ENCODE measurements at regions of chr5 and their contacts with region 1.

Region 1: GRCh38 chr5:16616536-16617273 is at the start of gene RETREG1:
- DNase-seq: peak; percentile 84 to 92 (median 91)
- ATAC-seq: peak; percentile 93
- H3K4me3 ChIP-seq: peak within 1 kb of the TSS; percentile 79
- H3K4me3 Mint-ChIP-seq: peak within 1 kb of the TSS in 6 of 10 donors; percentile 96 to 99 (median 98)
- H3K27ac ChIP-seq: peak within 1 kb of the TSS; percentile 98
- H3K27ac Mint-ChIP-seq: peak within 1 kb of the TSS in 7 of 9 donors; percentile 92 to 99 (median 99)
- H3K4me1 ChIP-seq: peaks cover 10 to 32% of the 10 kb centered on the region in 2 donors
- H3K4me1 Mint-ChIP-seq: peaks cover 32 to 52% (median 44%) of the 10 kb centered on the region in 7 donors
- H3K27me3 ChIP-seq: no peaks in the 10 kb centered on the region
- H3K27me3 Mint-ChIP-seq: no peaks in the 10 kb centered on the region
- total RNA-seq, gene RETREG1: 37.4 to 78.3 (median 47.4) TPM

Region 2: DNA sequence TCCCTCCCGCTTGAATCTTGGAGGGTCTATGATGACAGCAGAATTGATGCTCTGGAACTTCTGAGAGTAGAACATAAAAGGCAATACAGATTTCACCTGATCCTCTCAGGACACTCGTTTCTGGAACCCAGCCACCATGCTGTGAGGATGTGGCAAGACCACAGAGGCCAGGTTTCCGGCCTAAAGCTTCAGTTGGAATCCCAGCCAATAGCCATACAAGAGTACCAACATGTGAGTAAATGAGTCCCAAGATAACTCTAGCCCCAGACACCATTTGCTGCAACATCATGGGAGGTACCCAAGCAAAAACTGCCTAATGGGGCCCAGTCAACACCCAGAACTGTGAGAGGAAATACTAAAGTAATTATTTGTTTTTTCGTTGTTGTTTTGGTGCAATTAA is 371.5 kb before region 1 on chr5:
- CTCF ChIA-PET with region 1: no interaction called
- POLR2A ChIA-PET with region 1: no interaction called
- intact Hi-C with region 1: no loop called
- DNase-seq: no peak
- ATAC-seq: no peak
- H3K4me3 ChIP-seq: no peak overlapping the region
- H3K4me3 Mint-ChIP-seq: no peak overlapping the region
- H3K27ac ChIP-seq: no peak overlapping the region
- H3K27ac Mint-ChIP-seq: no peak overlapping the region
- H3K4me1 ChIP-seq: no peaks in the 10 kb centered on the region
- H3K4me1 Mint-ChIP-seq: peaks cover 0 to 2% (median 0%) of the 10 kb centered on the region in 7 donors
- H3K27me3 ChIP-seq: no peaks in the 10 kb centered on the region
- H3K27me3 Mint-ChIP-seq: peaks cover 0 to 11% (median 5%) of the 10 kb centered on the region in 5 donors

Region 3: GRCh38 chr5:16489322-16489791 is 127.3 kb before region 1 on chr5:
- CTCF ChIA-PET with region 1: no interaction called
- POLR2A ChIA-PET with region 1: no interaction called
- intact Hi-C with region 1: loop called in 1 of 2 experiments (anchors 5 kb)
- DNase-seq: peak in 5 of 9 donors; percentile 18 to 53 (median 46)
- ATAC-seq: peak; percentile 86
- H3K4me3 ChIP-seq: no peak overlapping the region
- H3K4me3 Mint-ChIP-seq: no peak overlapping the region
- H3K27ac ChIP-seq: no peak overlapping the region
- H3K27ac Mint-ChIP-seq: peak overlapping the region in 4 of 9 donors; percentile 1 to 60 (median 41)
- H3K4me1 ChIP-seq: no peaks in the 10 kb centered on the region
- H3K4me1 Mint-ChIP-seq: peaks cover 9 to 86% (median 71%) of the 10 kb centered on the region in 7 donors
- H3K27me3 ChIP-seq: no peaks in the 10 kb centered on the region
- H3K27me3 Mint-ChIP-seq: no peaks in the 10 kb centered on the region

Region 4: DNA sequence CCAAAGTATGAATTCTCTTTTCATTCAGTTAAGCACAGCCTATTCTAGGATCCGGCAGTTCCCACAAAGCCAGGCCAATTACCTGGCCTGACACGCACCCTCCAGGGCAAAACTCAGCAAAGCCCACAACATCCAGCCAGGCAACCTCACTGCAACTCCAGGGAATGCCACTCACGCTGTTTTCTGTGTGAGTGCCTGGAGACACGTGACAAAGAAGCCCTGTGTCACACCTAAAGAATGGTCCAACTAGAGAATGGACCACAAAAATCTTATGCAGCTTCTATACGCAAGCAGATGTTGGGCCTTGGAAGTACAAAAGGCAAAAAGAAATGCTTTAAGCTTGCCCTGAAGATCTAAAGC is 20.1 kb before region 1 on chr5:
- CTCF ChIA-PET with region 1: no interaction called
- POLR2A ChIA-PET with region 1: no interaction called
- intact Hi-C with region 1: loop called in 1 of 2 experiments (anchors 2 kb)
- DNase-seq: no peak
- ATAC-seq: no peak
- H3K4me3 ChIP-seq: no peak overlapping the region
- H3K4me3 Mint-ChIP-seq: peak overlapping the region in 2 of 10 donors; percentile 21 to 72
- H3K27ac ChIP-seq: no peak overlapping the region
- H3K27ac Mint-ChIP-seq: peak overlapping the region in 5 of 9 donors; percentile 21 to 67 (median 51)
- H3K4me1 ChIP-seq: peaks cover 0 to 27% of the 10 kb centered on the region in 2 donors
- H3K4me1 Mint-ChIP-seq: peaks cover 43 to 96% (median 85%) of the 10 kb centered on the region in 7 donors
- H3K27me3 ChIP-seq: no peaks in the 10 kb centered on the region
- H3K27me3 Mint-ChIP-seq: no peaks in the 10 kb centered on the region

Region 5: GRCh38 chr5:16642862-16643261 is 26.2 kb after region 1 on chr5:
- CTCF ChIA-PET with region 1: no interaction called
- POLR2A ChIA-PET with region 1: interaction called, 11 read pairs
- intact Hi-C with region 1: loop called in 1 of 2 experiments (anchors 1 kb)
- DNase-seq: no peak
- ATAC-seq: no peak
- H3K4me3 ChIP-seq: no peak overlapping the region
- H3K4me3 Mint-ChIP-seq: peak overlapping the region in 1 of 10 donors; percentile 29
- H3K27ac ChIP-seq: no peak overlapping the region
- H3K27ac Mint-ChIP-seq: peak overlapping the region in 3 of 9 donors; percentile 11 to 80 (median 59)
- H3K4me1 ChIP-seq: peaks cover 0 to 12% of the 10 kb centered on the region in 2 donors
- H3K4me1 Mint-ChIP-seq: peaks cover 6 to 50% (median 23%) of the 10 kb centered on the region in 7 donors
- H3K27me3 ChIP-seq: no peaks in the 10 kb centered on the region
- H3K27me3 Mint-ChIP-seq: no peaks in the 10 kb centered on the region

Region 6: DNA sequence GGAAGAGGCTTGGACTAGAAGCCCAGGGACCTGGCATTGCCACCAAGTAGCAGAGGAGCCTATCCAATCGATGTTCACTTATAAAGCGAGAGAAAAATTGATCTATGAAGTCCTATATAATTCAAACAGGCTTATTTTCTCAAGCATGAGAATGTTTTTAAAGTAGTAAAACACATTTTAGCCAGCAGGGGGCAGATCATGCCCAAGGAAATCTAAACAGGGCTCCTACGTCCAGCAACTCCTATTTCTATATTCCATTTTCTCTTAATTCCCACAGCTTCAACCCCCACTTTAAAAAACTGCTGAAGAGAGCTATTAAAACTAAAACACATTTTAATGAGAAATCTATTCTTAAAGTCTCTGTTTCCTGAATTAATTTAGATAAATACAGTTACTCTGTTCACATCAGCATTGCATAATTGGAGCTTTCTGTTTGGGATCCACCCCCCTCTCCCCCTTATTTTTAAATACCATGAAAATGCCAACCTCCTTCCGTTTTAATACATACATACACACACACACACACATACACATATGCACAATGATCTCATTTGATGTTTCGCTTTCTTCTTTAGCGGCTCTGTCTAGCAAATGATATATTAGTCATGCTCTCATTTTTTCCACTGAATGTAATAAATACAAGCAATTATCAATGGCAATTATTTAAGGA is 174.5 kb after region 1 on chr5:
- CTCF ChIA-PET with region 1: no interaction called
- POLR2A ChIA-PET with region 1: no interaction called
- intact Hi-C with region 1: no loop called
- DNase-seq: peak in 5 of 9 donors; percentile 11 to 32 (median 25)
- ATAC-seq: peak; percentile 44
- H3K4me3 ChIP-seq: no peak overlapping the region
- H3K4me3 Mint-ChIP-seq: peak overlapping the region in 8 of 10 donors; percentile 8 to 72 (median 58)
- H3K27ac ChIP-seq: no peak overlapping the region
- H3K27ac Mint-ChIP-seq: no peak overlapping the region
- H3K4me1 ChIP-seq: no peaks in the 10 kb centered on the region
- H3K4me1 Mint-ChIP-seq: peaks cover 0 to 11% (median 5%) of the 10 kb centered on the region in 7 donors
- H3K27me3 ChIP-seq: no peaks in the 10 kb centered on the region
- H3K27me3 Mint-ChIP-seq: no peaks in the 10 kb centered on the region

Measured in naive thymus-derived CD4-positive, alpha-beta T cell (primary cell).